ENCODE measurements at regions of chr22 and their contacts with region 1.

Region 1: DNA sequence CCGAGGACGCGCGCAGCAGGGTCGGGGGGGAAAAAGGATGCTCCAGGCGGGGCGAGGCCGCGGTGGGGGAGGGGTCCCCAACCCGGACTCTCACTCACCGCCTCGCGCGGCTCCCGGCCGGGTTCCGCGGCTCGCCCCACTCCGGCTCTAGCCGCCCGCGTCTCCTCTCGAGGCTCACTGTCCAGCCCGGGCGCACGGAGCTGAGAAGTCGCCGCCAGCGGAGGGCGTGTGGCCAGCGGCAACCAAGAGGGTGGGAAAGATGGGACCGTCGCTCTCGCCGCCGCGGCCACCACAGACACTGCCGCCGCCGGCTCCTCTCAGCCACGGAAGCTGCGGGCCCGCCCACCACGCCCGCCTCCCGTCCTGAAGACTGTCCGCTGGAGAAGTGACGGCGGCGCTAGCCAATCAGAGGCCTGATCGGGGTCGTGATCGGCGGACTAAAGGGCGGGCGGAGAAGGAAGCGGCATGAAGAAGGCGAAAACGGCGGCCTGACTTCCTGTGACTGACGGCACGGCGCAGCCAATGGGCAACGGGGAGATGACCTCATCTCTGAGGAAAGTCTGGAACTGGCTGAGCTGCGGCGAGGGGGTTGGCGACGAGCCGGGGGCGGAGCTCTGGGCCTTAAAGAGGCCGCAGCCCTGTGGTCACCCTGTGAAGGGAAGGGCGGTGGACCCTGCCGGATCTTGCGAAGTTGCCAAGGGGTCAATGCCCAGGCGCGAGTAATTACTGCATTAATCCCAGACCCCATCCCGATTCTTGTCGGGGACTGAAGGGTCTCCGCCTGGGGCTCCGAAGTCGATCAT is at the start of gene MRTFA:
- DNase-seq: peak; percentile 99
- H3K4me3 Mint-ChIP-seq: peak within 1 kb of the TSS; percentile 88
- H3K27ac Mint-ChIP-seq: peak within 1 kb of the TSS; percentile 94
- H3K4me1 Mint-ChIP-seq: peaks cover 28% of the 10 kb centered on the region
- H3K27me3 Mint-ChIP-seq: no peaks in the 10 kb centered on the region
- CTCF ChIP-seq: no peak
- total RNA-seq, gene MRTFA: 47.2 and 52.7 TPM in 2 replicates

Region 2: GRCh38 chr22:40499187-40499753 is 137.3 kb before region 1 on chr22:
- CTCF ChIA-PET with region 1: no interaction called
- POLR2A ChIA-PET with region 1: interaction called, 21 read pairs
- intact Hi-C with region 1: no loop called
- DNase-seq: peak; percentile 90
- H3K4me3 Mint-ChIP-seq: peak overlapping the region; percentile 25
- H3K27ac Mint-ChIP-seq: peak overlapping the region; percentile 78
- H3K4me1 Mint-ChIP-seq: peaks cover 29% of the 10 kb centered on the region
- H3K27me3 Mint-ChIP-seq: no peaks in the 10 kb centered on the region
- CTCF ChIP-seq: no peak

Region 3: DNA sequence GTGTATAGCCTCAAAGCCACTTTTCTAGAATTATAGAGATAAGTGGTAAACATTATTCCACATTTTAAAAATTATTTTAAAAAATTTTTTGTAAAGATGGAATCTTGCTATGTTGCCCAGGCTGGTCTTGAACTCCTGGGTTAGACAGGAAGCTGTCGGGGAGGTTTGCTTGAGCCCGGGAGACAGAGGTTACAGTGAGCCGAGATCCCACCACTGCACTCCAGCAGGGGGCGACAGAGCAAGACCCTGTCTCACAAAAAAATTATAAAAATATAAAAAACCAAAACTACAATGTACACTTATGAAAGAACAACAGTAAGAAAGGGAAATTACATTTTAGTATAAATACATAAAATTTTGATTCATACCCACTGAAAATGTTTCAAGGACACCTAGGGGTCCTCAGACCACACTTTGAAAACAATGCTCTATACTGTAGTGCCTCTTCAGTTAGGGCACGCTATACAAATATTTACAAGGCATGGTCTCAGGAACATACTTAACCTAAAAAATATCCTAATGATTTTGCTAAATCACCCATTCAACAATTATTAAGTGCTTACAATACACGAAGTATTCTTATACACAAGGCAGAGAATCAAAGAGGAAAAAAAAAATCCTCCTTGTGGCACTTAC is 111.2 kb before region 1 on chr22:
- CTCF ChIA-PET with region 1: interaction called, 12 read pairs
- POLR2A ChIA-PET with region 1: interaction called, 16 read pairs
- intact Hi-C with region 1: loop called (anchors 2 kb)
- DNase-seq: peak; percentile 65
- H3K4me3 Mint-ChIP-seq: no peak overlapping the region
- H3K27ac Mint-ChIP-seq: no peak overlapping the region
- H3K4me1 Mint-ChIP-seq: peaks cover 12% of the 10 kb centered on the region
- H3K27me3 Mint-ChIP-seq: no peaks in the 10 kb centered on the region
- CTCF ChIP-seq: peak; percentile 54

Region 4: DNA sequence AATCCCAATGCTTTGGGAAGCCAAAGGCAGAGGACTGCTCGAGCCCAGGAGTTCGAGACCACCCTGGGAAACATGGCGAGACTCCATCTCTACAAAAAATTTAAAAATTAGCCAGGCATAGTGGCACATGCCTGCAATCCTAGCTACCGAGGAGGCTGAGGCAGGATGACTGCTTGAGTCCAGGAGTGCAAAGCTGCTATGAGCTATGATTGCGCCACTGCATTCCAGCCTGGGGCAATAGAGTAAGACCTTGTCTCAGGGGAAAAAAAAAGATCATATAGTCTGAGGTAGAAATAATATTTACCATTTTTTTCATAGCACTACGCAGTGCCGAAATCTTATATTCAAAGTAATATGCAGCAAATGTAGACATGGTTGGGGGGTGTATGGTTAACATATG is 47.9 kb before region 1 on chr22:
- CTCF ChIA-PET with region 1: no interaction called
- POLR2A ChIA-PET with region 1: interaction called, 8 read pairs
- intact Hi-C with region 1: loop called (anchors 2 kb)
- DNase-seq: peak; percentile 89
- H3K4me3 Mint-ChIP-seq: no peak overlapping the region
- H3K27ac Mint-ChIP-seq: peak overlapping the region; percentile 63
- H3K4me1 Mint-ChIP-seq: peaks cover 38% of the 10 kb centered on the region
- H3K27me3 Mint-ChIP-seq: no peaks in the 10 kb centered on the region
- CTCF ChIP-seq: no peak

Region 5: GRCh38 chr22:40703174-40703573 is 66.6 kb after region 1 on chr22:
- CTCF ChIA-PET with region 1: no interaction called
- POLR2A ChIA-PET with region 1: no interaction called
- intact Hi-C with region 1: no loop called
- DNase-seq: no peak
- H3K4me3 Mint-ChIP-seq: no peak overlapping the region
- H3K27ac Mint-ChIP-seq: no peak overlapping the region
- H3K4me1 Mint-ChIP-seq: no peaks in the 10 kb centered on the region
- H3K27me3 Mint-ChIP-seq: peaks cover 4% of the 10 kb centered on the region
- CTCF ChIP-seq: no peak

Measured in MCF 10A (cell line).